GM18951 (cell line): ENCODE measurements at regions of chr3 and their contacts with region 1.

Region 1: DNA sequence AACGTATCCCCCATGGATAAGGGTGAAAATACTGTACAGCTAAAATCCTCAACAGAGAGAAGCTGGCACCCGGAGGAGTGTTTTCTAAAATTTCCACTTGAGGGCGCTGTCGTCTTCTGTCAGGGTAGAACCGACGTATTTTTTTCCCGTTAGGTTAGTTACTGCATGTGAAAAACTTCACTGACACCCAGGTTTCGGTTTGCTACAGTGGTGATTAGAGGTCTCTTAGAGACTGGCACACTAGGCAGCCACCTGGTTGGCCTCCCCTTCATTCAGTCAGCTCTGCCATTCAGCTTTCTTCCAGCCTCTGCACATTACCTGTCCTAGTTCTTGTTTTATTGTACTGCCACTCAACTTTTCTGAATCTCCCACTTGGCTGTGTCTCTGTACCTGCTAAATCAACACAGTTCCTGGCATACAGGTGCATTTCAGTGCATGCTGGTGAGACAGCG is 18.4 kb downstream of the CCK start:
- POLR2A ChIP-seq: no peak

Region 2: DNA sequence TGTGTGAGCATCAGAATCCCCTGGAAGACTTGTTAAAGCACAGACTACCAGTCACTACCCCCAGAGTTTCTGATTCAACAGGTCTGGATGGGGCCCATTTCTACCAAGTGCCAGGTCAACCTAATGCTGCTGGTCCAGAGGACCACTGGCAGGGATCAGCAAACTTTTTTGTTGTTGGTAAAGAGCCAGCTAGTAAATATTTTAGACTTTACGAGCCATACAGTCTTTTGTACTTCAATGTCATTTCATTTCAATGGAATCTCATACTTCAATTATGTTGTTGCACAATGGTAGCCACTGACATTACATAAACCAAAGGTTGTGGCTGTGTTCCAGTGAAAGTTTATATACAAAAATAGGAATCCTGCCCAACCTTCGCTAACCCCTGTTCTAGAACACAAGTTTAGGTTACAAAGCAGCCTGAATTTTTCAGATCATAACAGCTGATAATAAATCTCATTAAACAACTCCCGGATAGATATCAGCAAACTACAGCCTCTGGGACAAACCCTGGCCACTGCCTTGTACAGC is 314.4 kb before region 1 on chr3:
- in situ Hi-C with region 1: no loop called
- POLR2A ChIP-seq: no peak

Region 3: GRCh38 chr3:42387802-42388651 is 140.4 kb after region 1 on chr3:
- in situ Hi-C with region 1: no loop called
- POLR2A ChIP-seq: no peak

Region 4: DNA sequence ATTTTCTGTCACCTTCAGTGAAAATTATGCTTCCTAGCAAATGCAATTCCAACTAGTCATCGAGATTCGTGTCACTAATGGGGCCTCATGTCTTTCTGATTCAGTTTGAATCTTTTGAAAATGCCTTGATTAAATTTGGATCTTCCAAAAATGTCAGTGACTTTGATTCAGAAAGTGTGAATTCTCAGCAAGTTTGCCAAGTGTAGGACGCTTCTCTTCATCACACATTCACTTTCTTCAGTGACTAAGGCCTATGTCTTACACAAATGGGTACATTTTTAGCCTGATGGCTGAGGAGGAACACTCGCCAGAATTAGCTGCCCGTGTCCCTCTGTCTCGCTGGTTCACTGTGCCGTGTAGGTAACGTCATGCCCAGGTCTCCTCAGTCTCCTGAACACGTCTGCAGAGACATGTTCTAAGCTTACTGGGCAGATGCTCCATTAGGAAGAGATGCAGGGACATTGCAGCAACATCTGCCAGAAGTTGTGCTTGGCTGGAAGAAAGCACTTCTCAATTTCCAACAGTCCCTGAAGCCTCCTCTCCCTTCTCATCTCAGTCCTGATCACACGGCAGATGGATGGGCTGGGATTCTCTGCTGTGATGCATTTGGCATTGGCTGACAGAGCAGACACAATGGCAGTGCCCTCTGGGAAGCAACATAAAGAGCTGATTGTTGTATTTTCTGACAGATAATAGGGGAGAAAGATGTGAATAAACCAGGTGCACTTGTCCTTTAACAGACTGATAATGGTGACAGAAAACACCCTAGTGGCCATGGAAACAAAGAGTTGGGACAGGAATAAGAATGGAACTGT is 191.9 kb after region 1 on chr3:
- in situ Hi-C with region 1: loop called (anchors 5 kb)
- POLR2A ChIP-seq: no peak

Region 5: GRCh38 chr3:42547401-42547945 is 299.9 kb after region 1 on chr3:
- in situ Hi-C with region 1: loop called (anchors 25 kb)
- POLR2A ChIP-seq: no peak